ENCODE measurements at regions of chr12 and their contacts with region 1.

Region 1: GRCh38 chr12:14410841-14411569 is 45.5 kb downstream of the ATF7IP start:
- DNase-seq: peak in 1 of 2 donors; percentile 72
- ATAC-seq: peak; percentile 72 to 81 (median 78)
- H3K4me3 ChIP-seq: peak overlapping the region; percentile 10
- H3K4me3 Mint-ChIP-seq: no peak overlapping the region
- H3K27ac ChIP-seq: peak overlapping the region; percentile 56
- H3K27ac Mint-ChIP-seq: peak overlapping the region; percentile 89 to 90
- H3K4me1 ChIP-seq: peaks cover 20% of the 10 kb centered on the region
- H3K4me1 Mint-ChIP-seq: peaks cover 59 to 66% of the 10 kb centered on the region in 2 donors
- H3K27me3 ChIP-seq: no peaks in the 10 kb centered on the region
- H3K27me3 Mint-ChIP-seq: no peaks in the 10 kb centered on the region
- CTCF ChIP-seq: no peak

Region 2: GRCh38 chr12:14394317-14395073 is 16.5 kb before region 1 on chr12:
- intact Hi-C with region 1: loop called (anchors 2 kb)
- DNase-seq: peak in 1 of 2 donors; percentile 83
- ATAC-seq: peak; percentile 55 to 73 (median 63)
- H3K4me3 ChIP-seq: peak overlapping the region; percentile 9
- H3K4me3 Mint-ChIP-seq: peak overlapping the region; percentile 92
- H3K27ac ChIP-seq: peak overlapping the region; percentile 85
- H3K27ac Mint-ChIP-seq: peak overlapping the region; percentile 85 to 93
- H3K4me1 ChIP-seq: peaks cover 25% of the 10 kb centered on the region
- H3K4me1 Mint-ChIP-seq: peaks cover 54 to 80% of the 10 kb centered on the region in 2 donors
- H3K27me3 ChIP-seq: no peaks in the 10 kb centered on the region
- H3K27me3 Mint-ChIP-seq: no peaks in the 10 kb centered on the region
- CTCF ChIP-seq: no peak

Region 3: DNA sequence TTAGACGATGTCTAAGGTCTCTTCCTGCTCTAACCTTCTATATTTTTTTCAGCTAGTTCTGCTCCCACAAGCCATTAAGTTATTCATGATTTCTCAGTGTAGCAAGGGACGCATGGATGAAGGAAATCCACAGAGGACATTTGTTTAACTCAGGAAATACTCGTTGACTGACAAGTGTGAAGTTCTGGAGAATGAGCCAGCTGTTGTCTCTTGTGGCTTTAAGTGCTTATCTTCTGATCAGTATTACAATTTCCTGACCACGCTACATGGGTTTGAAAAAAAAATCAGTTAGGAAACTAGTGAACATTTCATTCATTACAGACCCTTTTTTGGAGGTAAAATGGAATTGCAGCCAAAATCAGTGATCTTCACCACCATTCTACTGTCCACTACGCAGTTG is 232.2 kb after region 1 on chr12:
- intact Hi-C with region 1: no loop called
- DNase-seq: peak in 1 of 2 donors; percentile 60
- ATAC-seq: peak in 1 of 3 donors; percentile 22
- H3K4me3 ChIP-seq: no peak overlapping the region
- H3K4me3 Mint-ChIP-seq: peak overlapping the region; percentile 28
- H3K27ac ChIP-seq: no peak overlapping the region
- H3K27ac Mint-ChIP-seq: no peak overlapping the region
- H3K4me1 ChIP-seq: peaks cover 4% of the 10 kb centered on the region
- H3K4me1 Mint-ChIP-seq: peaks cover 14 to 15% of the 10 kb centered on the region in 2 donors
- H3K27me3 ChIP-seq: peaks cover 2% of the 10 kb centered on the region
- H3K27me3 Mint-ChIP-seq: peaks cover 13 to 24% of the 10 kb centered on the region in 2 donors
- CTCF ChIP-seq: no peak

Measured in natural killer cell (primary cell).